CD4-positive, alpha-beta T cell (primary cell): ENCODE measurements at regions of chr1 and their contacts with region 1.

Region 1: DNA sequence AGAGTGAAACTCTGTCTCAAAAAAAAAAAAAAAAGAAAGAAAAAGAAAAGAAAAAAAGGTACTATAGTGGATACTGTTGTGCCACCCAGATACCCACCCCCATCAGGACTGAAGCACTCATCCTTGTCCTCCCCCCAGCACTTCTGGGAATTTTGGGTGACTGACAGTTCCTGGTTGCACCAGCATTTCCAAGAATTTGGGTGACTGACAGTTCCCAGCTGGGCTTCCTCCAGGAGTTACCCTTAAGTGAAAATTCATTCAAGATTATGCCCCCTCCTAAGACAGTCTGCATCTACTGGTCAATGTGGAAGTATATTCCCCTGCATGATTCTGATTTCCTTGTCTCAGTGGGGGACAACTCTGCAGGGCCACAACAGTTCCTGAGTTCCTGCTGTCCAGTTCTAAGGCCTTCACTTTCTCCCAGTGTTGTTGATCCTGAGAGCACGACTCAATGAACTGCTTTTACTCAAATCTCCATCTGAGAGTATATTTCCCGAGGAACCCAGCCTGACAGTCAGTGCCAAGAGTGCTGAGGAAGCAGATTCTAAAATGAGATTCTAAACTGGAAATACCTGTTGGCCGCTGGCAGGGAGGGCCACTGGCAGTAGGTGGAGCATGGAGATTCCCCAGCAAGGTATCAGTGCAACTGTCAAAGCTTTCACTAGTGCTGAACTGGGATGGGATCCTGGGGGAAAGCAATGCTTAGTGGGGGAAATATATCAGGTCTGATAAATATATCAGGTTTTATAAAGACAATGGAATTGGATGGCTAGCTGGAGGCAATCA is 18.5 kb downstream of the RIIAD1 start:
- DNase-seq: no peak
- ATAC-seq: no peak
- H3K4me3 ChIP-seq: no peak overlapping the region
- H3K4me3 Mint-ChIP-seq: no peak overlapping the region
- H3K27ac ChIP-seq: no peak overlapping the region
- H3K27ac Mint-ChIP-seq: no peak overlapping the region
- H3K4me1 ChIP-seq: no peaks in the 10 kb centered on the region
- H3K4me1 Mint-ChIP-seq: no peaks in the 10 kb centered on the region
- H3K27me3 ChIP-seq: no peaks in the 10 kb centered on the region
- H3K27me3 Mint-ChIP-seq: peaks cover 4% of the 10 kb centered on the region
- CTCF ChIP-seq: no peak

Region 2: DNA sequence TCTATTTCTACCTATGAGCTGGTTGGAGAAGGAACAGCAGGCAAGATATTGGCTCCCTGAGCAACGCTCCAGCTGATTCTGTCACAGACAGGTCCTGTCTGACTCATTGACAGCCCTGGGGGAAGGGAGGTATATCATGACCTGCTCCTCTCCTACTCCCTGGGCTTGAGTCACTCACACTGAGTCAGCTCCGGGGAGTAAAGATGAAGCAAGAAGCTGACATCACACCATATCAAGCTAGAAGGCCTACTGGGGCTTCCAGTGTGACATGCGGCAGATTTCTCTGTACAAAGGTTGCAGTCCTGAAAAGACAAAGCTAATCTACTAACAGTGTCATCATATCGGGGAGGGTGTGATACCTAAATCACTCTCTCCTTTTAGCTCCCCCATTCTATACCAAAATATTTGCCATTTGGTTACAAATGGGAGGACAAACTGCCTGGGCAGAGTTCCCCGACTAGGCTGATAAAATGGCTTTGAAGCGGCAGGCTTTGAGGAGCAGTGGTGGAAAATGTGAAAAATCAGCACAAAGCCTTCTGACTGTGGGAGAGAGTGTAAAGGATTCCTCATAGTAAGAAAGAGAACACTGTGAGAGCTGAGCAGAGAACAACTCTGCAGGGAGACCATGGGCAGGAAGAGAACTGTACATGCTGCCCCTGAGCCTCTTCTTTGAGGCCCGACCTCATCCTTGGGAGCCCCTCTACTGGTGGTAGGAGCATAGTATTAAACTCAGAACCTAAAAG is 428.0 kb before region 1 on chr1:
- CTCF ChIA-PET with region 1: no interaction called
- POLR2A ChIA-PET with region 1: no interaction called
- intact Hi-C with region 1: loop called in 1 of 2 experiments (anchors 10 kb)
- DNase-seq: peak in 13 of 14 experiments; percentile 20 to 82 (median 54)
- ATAC-seq: peak; percentile 91
- H3K4me3 ChIP-seq: no peak overlapping the region
- H3K4me3 Mint-ChIP-seq: no peak overlapping the region
- H3K27ac ChIP-seq: peak overlapping the region; percentile 25 to 39
- H3K27ac Mint-ChIP-seq: peak overlapping the region; percentile 59
- H3K4me1 ChIP-seq: peaks cover 28% of the 10 kb centered on the region
- H3K4me1 Mint-ChIP-seq: peaks cover 46% of the 10 kb centered on the region
- H3K27me3 ChIP-seq: no peaks in the 10 kb centered on the region
- H3K27me3 Mint-ChIP-seq: no peaks in the 10 kb centered on the region
- CTCF ChIP-seq: no peak

Region 3: DNA sequence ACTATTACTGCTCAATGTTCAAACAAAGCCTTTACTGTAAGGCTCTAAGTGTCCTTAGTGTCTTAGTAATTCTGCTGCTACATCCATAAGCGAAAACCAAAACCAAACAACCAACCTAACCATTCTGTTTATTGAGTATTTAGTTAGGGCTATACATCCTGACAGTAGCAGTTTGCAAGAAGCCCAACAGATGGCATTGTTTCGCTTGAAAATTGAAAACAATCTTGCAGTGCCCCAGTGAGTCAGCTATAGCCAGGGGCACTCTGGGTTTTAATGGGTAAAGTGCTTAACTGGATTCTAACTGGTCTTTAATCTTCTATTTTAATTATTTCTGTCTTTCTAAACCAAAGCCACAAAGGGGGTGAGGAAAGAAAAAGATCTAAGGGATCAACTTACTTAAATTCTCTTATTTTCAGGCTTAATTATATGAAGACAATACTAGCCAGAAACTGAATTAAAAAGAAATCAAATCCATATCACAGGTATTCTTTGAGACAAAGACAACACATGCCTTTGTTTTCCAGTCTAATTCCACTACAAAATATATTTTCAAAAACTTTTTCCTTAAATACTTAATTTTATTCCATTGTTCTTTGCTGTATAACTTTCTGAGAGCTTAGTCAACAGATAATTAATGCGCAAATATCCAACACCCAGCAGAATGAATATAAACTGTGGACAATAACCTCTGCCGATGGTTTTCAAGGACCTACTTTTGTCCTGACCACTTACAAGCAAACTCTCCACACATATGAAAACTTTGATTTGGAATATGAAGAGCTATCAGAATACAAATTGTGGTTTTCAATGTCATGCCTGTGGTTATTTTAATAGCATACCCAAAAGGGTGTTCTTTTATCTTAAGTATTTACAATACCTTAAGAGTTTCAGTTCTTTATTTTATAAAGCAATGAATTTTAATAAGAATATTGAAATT is 295.7 kb before region 1 on chr1:
- CTCF ChIA-PET with region 1: interaction called, 4 read pairs
- POLR2A ChIA-PET with region 1: no interaction called
- intact Hi-C with region 1: loop called (anchors 1 kb)
- DNase-seq: peak; percentile 40 to 87 (median 60)
- ATAC-seq: peak; percentile 99
- H3K4me3 ChIP-seq: no peak overlapping the region
- H3K4me3 Mint-ChIP-seq: no peak overlapping the region
- H3K27ac ChIP-seq: no peak overlapping the region
- H3K27ac Mint-ChIP-seq: peak overlapping the region; percentile 14
- H3K4me1 ChIP-seq: peaks cover 11% of the 10 kb centered on the region
- H3K4me1 Mint-ChIP-seq: peaks cover 55% of the 10 kb centered on the region
- H3K27me3 ChIP-seq: no peaks in the 10 kb centered on the region
- H3K27me3 Mint-ChIP-seq: no peaks in the 10 kb centered on the region
- CTCF ChIP-seq: peak; percentile 85

Region 4: DNA sequence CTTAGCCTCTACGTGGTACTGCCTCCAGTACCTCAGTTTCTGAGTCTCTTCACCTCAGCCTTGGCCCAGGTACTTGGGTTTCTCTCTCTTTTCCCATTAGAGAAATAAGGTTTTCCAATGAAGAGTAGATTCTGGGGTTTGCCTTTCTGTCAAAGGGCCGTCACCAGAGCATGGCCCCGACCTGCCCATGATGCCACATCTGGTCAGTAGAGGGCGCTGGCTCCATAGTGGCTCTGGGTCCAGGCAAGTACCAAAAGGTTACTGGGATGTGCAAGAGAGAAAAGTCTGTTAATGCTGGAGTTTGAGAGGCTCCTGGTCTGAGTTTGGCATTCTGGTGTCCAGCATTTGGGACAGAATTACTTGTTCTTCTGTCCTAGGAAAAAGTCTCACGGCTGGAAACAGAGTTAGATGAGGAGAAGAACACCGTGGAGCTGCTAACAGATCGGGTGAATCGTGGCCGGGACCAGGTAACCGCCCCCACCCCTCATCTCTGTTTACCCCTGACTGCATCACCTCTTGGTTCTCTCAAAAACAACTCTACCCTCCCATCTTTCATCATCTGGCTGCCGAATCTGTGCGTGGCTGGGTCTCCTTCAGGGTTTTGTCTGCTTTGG is 205.0 kb before region 1 on chr1:
- CTCF ChIA-PET with region 1: no interaction called
- POLR2A ChIA-PET with region 1: no interaction called
- intact Hi-C with region 1: loop called (anchors 1 kb)
- DNase-seq: peak; percentile 60 to 84 (median 72)
- ATAC-seq: peak; percentile 84
- H3K4me3 ChIP-seq: no peak overlapping the region
- H3K4me3 Mint-ChIP-seq: no peak overlapping the region
- H3K27ac ChIP-seq: no peak overlapping the region
- H3K27ac Mint-ChIP-seq: no peak overlapping the region
- H3K4me1 ChIP-seq: peaks cover 10% of the 10 kb centered on the region
- H3K4me1 Mint-ChIP-seq: peaks cover 5% of the 10 kb centered on the region
- H3K27me3 ChIP-seq: no peaks in the 10 kb centered on the region
- H3K27me3 Mint-ChIP-seq: no peaks in the 10 kb centered on the region
- CTCF ChIP-seq: peak; percentile 82

Region 5: DNA sequence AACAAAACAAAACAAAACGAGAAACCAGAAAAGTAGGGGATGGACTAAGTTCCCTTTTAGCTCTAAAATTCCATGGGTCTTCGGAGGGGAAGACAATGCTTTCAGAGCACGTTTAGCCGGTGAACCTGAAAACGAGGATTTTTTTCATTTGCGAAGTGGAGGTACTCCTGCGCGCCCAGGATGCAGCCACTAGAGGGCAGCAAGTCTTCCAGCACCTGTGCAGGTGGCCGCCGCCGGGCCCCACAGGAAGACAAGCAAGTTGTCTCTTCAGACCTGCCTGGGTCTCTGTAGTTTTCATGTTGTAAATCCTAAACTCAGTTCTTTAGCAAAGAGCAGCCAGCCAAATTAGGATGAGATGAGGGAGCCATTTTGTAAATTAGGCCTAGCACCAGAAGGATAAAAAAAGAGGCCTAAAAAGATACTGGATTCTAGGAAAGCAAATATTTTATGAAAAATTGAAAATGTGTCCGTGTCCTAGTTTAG is 145.6 kb before region 1 on chr1:
- CTCF ChIA-PET with region 1: interaction called, 4 read pairs
- POLR2A ChIA-PET with region 1: no interaction called
- intact Hi-C with region 1: loop called (anchors 1 kb)
- DNase-seq: peak; percentile 80 to 92 (median 86)
- ATAC-seq: peak; percentile 100
- H3K4me3 ChIP-seq: peak overlapping the region; percentile 14
- H3K4me3 Mint-ChIP-seq: peak overlapping the region; percentile 49
- H3K27ac ChIP-seq: no peak overlapping the region
- H3K27ac Mint-ChIP-seq: no peak overlapping the region
- H3K4me1 ChIP-seq: peaks cover 11% of the 10 kb centered on the region
- H3K4me1 Mint-ChIP-seq: peaks cover 10% of the 10 kb centered on the region
- H3K27me3 ChIP-seq: peaks cover 0 to 6% of the 10 kb centered on the region in 2 experiments
- H3K27me3 Mint-ChIP-seq: peaks cover 4% of the 10 kb centered on the region
- CTCF ChIP-seq: peak; percentile 95